ENCODE measurements at regions of chr16 and their contacts with region 1.

Region 1: GRCh38 chr16:85898521-85899442 is at the start of gene IRF8:
- DNase-seq: peak; percentile 92
- H3K4me3 ChIP-seq: peak within 1 kb of the TSS; percentile 96
- H3K27ac ChIP-seq: peak within 1 kb of the TSS; percentile 99
- H3K4me1 ChIP-seq: peaks cover 51% of the 10 kb centered on the region
- CTCF ChIP-seq: no peak
- total RNA-seq, gene IRF8: 181 and 188 TPM in 2 replicates

Region 2: DNA sequence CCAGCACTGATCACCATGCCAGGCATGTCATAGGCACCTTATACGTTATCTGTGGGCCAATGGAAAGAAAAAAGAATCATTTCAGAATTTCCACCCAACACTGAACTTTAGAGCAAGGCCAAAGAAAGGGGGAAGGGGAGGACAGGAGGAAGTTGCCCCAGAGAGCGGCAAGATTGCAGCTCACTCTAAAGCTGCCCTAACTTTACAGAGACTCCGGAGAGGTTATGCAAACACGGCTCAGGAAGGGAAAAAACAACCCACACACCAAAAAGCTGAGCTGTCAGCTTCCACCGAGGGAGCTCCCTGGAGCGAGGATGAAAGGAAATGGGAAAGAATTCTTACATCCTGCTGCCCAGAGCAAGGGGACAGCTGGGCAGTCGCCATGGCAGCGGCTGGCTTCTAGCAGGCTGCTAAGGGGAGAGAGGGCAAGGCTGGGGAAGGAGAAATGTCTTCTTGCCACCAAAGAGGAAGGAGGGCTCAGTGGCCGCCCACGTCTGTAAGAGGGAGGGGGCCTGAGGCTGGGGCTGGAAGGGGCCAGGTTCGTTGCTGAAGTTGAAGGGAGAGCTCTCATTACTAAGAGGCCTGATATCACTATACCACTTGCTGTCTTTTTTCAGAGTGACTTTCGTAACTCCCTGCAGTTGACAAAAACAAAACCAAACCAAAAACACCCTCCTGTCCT is 1299.1 kb before region 1 on chr16:
- CTCF ChIA-PET with region 1: no interaction called
- POLR2A ChIA-PET with region 1: no interaction called
- intact Hi-C with region 1: loop called (anchors 10 kb)
- DNase-seq: peak; percentile 71
- H3K4me3 ChIP-seq: peak overlapping the region; percentile 60
- H3K27ac ChIP-seq: peak overlapping the region; percentile 97
- H3K4me1 ChIP-seq: peaks cover 93% of the 10 kb centered on the region
- CTCF ChIP-seq: no peak

Region 3: DNA sequence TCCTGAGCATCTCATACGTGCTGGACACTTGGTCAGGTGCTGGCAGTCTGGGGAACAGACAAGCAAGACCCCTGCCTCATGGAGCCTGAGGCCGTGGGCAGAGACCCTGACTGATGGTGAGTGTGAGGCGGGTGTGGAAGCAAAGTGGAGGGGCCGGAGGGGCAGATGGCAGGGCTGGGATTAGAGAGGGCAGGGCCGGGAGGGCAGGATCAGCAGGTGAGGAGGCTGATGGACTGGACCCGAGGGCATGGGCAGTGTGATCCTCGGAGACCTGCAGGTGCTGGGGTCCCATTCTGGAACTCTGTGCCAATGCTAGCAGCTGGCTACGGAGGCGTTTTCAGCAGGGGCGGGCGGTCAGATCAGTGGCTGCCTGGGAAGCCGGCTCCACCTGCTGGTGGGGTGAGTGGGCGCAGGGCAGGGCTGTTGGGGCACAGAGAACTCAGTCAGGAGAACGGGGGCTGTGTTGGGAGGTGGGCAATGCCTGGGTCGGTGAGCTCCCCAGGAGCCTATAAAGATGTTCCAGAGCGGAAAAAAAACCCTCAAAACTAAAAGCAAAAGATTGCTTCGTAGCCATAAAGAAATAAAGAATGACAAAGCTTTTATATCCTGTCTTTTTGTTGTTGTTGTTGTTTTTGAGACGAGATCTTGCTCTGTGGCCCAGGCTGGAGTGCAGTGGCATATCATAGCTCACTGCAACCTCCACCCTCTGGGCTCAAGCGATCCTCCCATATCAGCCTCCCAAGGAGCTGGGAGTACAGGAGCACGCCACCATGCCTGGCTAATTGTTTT is 139.0 kb before region 1 on chr16:
- CTCF ChIA-PET with region 1: no interaction called
- POLR2A ChIA-PET with region 1: interaction called, 3 read pairs
- intact Hi-C with region 1: loop called (anchors 5 kb)
- DNase-seq: peak; percentile 75
- H3K4me3 ChIP-seq: peak overlapping the region; percentile 46
- H3K27ac ChIP-seq: peak overlapping the region; percentile 90
- H3K4me1 ChIP-seq: peaks cover 73% of the 10 kb centered on the region
- CTCF ChIP-seq: peak; percentile 87

Region 4: DNA sequence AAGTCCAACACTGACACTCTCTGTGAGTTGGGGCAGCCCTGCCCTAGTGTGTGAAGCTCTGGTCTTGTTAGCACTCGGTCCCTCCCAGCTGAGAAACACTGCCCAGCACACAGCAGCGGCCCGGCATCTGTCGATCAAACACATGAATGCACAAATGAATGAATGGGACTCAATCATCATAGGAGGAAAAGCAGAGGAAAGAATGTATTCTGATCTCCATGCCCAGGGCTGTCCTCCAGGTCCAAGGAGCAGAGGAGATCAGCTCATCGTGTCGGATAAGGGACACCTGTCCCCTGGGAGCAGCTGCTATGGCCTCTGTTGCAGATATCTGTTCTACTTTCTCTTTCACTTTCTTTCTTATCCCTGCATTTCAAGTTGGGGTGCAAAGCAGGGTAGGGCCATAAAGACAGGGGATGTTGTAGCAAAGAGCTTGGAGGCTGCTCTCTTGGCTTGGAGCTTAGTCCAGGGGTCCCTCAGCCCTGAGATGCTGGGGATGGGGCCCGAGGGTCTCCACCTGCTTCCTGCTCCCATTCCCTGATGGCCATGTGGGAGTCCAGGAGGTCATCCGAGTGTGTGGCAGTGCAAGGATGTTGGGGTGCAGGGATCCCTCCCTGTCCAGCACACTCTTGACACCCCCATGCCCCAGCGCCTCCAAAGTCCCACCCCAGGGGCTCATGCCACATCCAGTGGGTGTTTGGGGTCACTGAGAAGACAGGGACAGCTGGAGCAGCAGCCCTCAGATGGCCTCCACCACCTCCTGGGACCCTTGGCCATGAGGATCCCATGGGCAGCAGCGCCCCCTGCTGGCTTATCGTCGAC is 88.4 kb after region 1 on chr16:
- CTCF ChIA-PET with region 1: interaction called, 4 read pairs
- POLR2A ChIA-PET with region 1: interaction called, 6 read pairs
- intact Hi-C with region 1: loop called (anchors 1 kb)
- DNase-seq: peak; percentile 71
- H3K4me3 ChIP-seq: no peak overlapping the region
- H3K27ac ChIP-seq: no peak overlapping the region
- H3K4me1 ChIP-seq: peaks cover 56% of the 10 kb centered on the region
- CTCF ChIP-seq: peak; percentile 59

Region 5: DNA sequence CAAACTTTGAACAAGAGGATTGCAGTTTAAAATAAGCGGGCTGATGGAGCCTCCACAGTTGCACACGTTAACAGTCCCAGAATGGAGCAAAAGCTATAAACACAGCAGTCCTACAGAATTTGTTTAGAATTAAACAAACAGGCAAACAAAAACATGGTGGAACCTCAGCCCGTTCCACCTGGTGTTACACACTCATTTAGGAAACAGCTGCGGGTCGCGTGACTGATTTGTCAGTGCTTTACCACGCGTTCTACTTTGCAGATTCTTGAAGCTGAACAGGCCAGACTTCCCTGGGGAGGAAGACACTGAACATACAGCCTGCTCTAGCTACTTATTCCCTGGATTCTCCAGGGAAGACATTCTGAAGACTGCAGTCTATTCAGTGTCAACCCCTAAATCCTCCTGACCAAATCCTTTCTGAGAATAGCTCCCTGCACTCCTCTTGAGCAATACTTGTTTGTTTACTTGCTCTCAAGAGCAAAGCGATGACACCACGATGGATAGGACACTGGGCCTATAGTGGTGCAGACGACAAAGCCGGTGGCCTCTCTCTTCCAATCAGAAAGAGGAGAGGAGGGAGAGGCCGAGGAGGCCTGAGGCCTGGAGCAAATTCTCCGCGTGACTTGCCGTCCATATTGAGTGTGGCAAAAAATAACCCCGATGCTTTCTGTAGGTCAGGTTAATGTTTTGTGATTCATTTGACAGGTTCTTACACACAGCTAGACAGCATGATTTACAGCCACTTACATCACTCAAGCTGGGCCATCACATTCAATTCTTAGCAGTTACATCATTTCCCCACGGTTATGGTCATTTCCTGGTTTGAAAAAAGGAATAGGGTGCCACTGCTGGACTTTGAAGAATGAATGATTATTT is 1489.4 kb after region 1 on chr16:
- CTCF ChIA-PET with region 1: no interaction called
- POLR2A ChIA-PET with region 1: no interaction called
- intact Hi-C with region 1: loop called (anchors 10 kb)
- DNase-seq: peak; percentile 97
- H3K4me3 ChIP-seq: peak overlapping the region; percentile 51
- H3K27ac ChIP-seq: peak overlapping the region; percentile 85
- H3K4me1 ChIP-seq: peaks cover 44% of the 10 kb centered on the region
- CTCF ChIP-seq: no peak

Measured in OCI-LY7 (cell line).